HAP-1 (cell line): ENCODE measurements at regions of chr11 and their contacts with region 1.

Region 1: DNA sequence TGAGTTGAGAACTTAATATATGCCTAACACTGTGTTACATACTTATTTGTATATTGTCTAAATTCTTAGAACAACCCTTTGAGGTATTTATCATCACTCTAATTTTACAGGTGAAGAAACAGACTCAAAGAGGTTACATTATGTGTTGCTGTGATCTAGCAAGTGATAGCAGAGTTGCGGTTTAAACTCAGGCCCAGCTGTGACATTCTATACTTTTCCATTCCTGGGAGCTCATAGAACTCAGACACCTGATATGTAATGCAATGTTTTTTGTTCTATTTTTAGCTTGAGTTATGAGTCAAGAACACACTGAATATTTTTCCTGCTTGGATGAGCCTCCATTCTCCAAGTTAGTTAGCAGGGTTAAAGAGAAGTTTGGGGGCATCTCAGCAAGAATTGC is 449.7 kb upstream of the DDI1 start:
- DNase-seq: no peak
- H3K4me3 ChIP-seq: no peak overlapping the region
- H3K4me1 ChIP-seq: peaks cover 7% of the 10 kb centered on the region
- H3K27me3 ChIP-seq: no peaks in the 10 kb centered on the region

Region 2: DNA sequence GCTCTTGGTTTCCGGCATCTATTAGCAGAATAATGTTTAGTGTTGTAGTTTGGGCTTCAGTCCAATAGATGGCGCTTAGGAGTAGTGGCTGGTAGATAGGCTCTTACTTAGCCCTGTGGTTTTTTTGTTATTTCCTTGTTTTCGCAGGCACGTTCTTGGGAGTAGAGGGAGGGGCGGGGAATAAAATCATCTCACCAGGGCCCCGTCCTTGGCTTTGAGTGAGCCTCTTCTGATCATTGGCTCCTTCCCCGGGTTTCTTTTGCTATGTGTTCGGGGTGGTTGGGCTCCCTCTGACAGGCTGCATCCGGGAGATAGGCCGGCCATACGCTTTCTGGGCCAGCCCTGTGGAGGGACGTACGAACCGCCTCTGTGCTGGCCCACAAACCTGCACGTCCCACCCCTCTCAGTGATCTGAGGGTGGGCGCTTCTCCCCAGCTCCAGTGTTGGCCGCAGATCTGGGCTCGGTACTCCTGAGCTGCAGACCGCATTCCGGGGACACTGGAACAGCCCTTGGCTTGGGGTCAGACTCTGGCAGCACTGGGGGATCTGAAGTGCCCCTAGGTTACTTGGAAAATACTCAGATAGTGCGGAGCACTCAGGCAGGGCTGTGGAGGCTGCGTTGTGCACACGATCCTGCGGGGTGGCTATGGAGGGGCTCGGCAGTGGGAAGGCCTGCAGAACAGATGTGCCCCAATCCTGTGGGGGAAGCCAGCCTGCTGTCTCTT is 260.5 kb before region 1 on chr11:
- in situ Hi-C with region 1: loop called (anchors 25 kb)
- DNase-seq: peak; percentile 50 to 75
- H3K4me3 ChIP-seq: no peak overlapping the region
- H3K4me1 ChIP-seq: peaks cover 8% of the 10 kb centered on the region
- H3K27me3 ChIP-seq: no peaks in the 10 kb centered on the region

Region 3: GRCh38 chr11:103696123-103696522 is 109.4 kb after region 1 on chr11:
- in situ Hi-C with region 1: no loop called
- DNase-seq: no peak
- H3K4me3 ChIP-seq: no peak overlapping the region
- H3K4me1 ChIP-seq: no peaks in the 10 kb centered on the region
- H3K27me3 ChIP-seq: no peaks in the 10 kb centered on the region; the same call in 1 of the 2 replicates